MCF 10A (cell line): ENCODE measurements at regions of chr2 and their contacts with region 1.

Region 1: GRCh38 chr2:75949385-75950030 is 238.8 kb upstream of the GCFC2 start:
- DNase-seq: no peak
- H3K4me3 Mint-ChIP-seq: no peak overlapping the region
- H3K27ac Mint-ChIP-seq: no peak overlapping the region
- H3K4me1 Mint-ChIP-seq: peaks cover 7% of the 10 kb centered on the region
- H3K27me3 Mint-ChIP-seq: no peaks in the 10 kb centered on the region
- CTCF ChIP-seq: no peak

Region 2: DNA sequence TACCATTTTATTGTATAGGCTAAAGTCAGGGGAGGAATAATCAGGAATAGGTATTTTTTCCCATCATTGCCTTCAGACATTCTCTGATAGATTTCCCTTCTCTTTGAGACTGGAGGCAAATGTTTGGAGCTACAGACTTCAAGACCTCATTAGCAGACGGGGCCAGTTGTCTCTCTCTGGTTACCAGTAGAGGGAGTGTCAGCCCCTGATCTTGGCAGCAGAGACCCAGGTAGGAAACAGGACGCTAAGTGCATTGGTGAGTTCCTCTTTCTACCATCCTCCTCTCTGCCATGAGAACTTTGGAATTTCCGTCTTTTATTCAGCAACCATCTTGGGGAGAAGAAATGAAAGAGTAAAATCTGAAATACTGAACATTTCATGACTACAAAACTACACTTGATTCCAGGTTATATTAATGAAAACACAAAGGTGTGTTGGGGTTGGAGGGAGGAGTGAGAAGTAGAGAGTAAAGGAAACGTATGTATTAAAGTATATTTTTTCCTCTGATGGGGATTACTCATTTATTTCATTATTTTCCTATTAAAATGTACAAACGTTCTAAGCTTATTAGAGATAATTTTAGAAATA is 52.6 kb before region 1 on chr2:
- CTCF ChIA-PET with region 1: interaction called, 3 read pairs
- POLR2A ChIA-PET with region 1: no interaction called
- intact Hi-C with region 1: loop called (anchors 5 kb)
- DNase-seq: peak; percentile 72
- H3K4me3 Mint-ChIP-seq: no peak overlapping the region
- H3K27ac Mint-ChIP-seq: no peak overlapping the region
- H3K4me1 Mint-ChIP-seq: no peaks in the 10 kb centered on the region
- H3K27me3 Mint-ChIP-seq: no peaks in the 10 kb centered on the region
- CTCF ChIP-seq: peak; percentile 56